H1 (cell line): ENCODE measurements at regions of chr4 and their contacts with region 1.

Region 1: GRCh38 chr4:120144634-120145033 is 78.0 kb upstream of the MAD2L1 start:
- DNase-seq: no peak
- H3K4me3 ChIP-seq: no peak overlapping the region
- H3K27ac ChIP-seq: no peak overlapping the region
- H3K4me1 ChIP-seq: no peaks in the 10 kb centered on the region
- H3K27me3 ChIP-seq: no peaks in the 10 kb centered on the region
- CTCF ChIP-seq: no peak
- EP300 ChIP-seq: no peak
- POLR2A ChIP-seq: no peak
- RAD21 ChIP-seq: no peak

Region 2: DNA sequence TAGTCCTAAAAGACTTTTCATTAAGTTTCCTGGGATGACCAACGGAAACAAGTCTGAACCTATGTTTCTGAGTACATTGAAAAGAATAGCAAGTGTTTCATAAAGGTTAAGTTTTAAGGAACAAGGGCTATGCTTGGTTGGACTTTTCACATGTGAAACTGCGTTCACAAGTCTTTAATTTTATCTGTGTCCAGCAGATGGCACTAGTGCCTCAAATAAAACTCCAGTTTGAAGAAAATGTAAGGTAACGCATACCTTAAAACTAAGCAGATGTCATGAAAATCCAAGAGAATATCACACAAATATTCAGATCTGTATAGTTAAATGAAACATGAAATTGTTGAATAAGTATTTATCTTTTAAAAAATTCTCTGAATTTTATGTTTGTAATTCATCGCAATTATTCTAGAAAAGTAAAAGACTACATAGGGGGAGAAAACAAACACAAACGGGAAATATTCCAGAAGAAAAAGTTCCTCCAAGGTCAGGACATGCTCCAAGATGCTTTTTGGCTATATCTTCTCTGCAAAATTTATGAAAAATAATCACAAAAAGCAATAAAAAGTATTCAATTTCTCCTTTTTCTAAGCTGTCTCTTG is 11.6 kb after region 1 on chr4:
- CTCF ChIA-PET with region 1: interaction called, 10 read pairs
- POLR2A ChIA-PET with region 1: no interaction called
- DNase-seq: peak in 1 of 2 experiments; percentile 5
- H3K4me3 ChIP-seq: no peak overlapping the region
- H3K27ac ChIP-seq: no peak overlapping the region
- H3K4me1 ChIP-seq: peaks cover 0 to 4% (median 1%) of the 10 kb centered on the region in 4 experiments; a peak in 2 of 7 replicates
- H3K27me3 ChIP-seq: no peaks in the 10 kb centered on the region
- CTCF ChIP-seq: peak in 2 of 3 experiments; percentile 59 to 62; a peak in 2 of 4 replicates
- EP300 ChIP-seq: no peak
- POLR2A ChIP-seq: no peak
- RAD21 ChIP-seq: peak; percentile 83

Region 3: GRCh38 chr4:120277391-120277790 is 132.8 kb after region 1 on chr4:
- CTCF ChIA-PET with region 1: no interaction called
- POLR2A ChIA-PET with region 1: no interaction called
- DNase-seq: no peak
- H3K4me3 ChIP-seq: no peak overlapping the region
- H3K27ac ChIP-seq: no peak overlapping the region
- H3K4me1 ChIP-seq: no peaks in the 10 kb centered on the region
- H3K27me3 ChIP-seq: no peaks in the 10 kb centered on the region
- CTCF ChIP-seq: no peak
- EP300 ChIP-seq: no peak
- POLR2A ChIP-seq: no peak
- RAD21 ChIP-seq: no peak